GM12878 (cell line): ENCODE measurements at regions of chr11 and their contacts with region 1.

Region 1: GRCh38 chr11:125070699-125071254 is 7.7 kb downstream of the SLC37A2 start:
- DNase-seq: peak; percentile 56
- ATAC-seq: peak; percentile 74
- H3K4me3 ChIP-seq: no peak overlapping the region
- H3K27ac ChIP-seq: peak overlapping the region; percentile 48
- H3K4me1 ChIP-seq: peaks cover 43% of the 10 kb centered on the region
- H3K27me3 ChIP-seq: no peaks in the 10 kb centered on the region
- CTCF ChIP-seq: no peak
- EP300 ChIP-seq: peak; percentile 54 to 66; a peak in 2 of 4 replicates
- POLR2A ChIP-seq: peak; percentile 34; the same call in 1 of the 2 replicates
- RAD21 ChIP-seq: no peak

Region 2: DNA sequence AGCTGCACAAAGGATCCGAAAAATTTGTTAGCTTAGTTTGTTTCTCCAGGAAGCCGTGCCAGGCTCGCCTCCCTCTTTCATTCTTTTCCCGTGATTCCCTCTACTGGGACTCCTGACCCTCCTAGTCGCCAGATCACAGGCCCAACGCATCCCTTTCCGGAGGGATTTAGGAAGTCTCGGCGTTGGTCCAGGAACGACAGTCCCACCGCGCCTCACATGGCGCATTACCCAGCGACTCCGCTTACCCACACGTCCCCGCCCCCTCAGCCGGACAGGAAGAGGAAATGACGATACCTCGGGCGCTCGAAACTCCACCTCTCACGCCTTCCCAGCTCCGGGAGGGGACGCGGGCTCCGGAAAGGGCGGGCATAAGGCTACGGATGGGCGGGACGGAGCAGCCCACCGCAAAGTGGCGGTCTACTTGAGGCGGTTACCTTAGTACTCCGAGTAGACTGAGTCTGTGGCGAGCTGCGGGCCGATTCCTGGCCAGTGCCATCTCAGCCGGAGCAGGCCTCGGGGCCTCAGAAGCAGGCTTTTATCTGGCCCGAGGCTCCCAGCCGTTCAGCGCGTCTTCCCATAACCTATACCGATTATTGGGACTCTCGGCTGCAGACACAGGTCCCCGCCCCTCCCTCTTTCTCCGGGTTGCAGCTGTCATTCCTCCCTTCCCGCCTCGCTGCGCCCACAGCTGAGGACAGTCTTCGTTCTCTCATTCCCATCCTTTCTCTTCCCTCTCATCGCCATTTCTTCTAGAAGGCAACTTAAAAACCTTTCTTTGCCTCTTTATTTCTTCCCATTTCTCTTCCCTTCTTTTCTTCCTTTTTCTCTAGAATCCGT is 116.8 kb before region 1 on chr11 and contains the start of gene CCDC15:
- CTCF ChIA-PET with region 1: interaction called, 3 read pairs
- POLR2A ChIA-PET with region 1: interaction called, 12 read pairs
- RAD21 ChIA-PET with region 1: interaction called, 5 read pairs
- SMC1A ChIA-PET with region 1: interaction called, 7 read pairs
- in situ Hi-C with region 1: no loop called
- intact Hi-C with region 1: loop called (anchors 2 kb)
- DNase-seq: peak; percentile 87
- ATAC-seq: peak; percentile 99
- H3K4me3 ChIP-seq: peak within 1 kb of the TSS; percentile 79
- H3K27ac ChIP-seq: peak within 1 kb of the TSS; percentile 54
- H3K4me1 ChIP-seq: no peaks in the 10 kb centered on the region; the same call in 1 of the 2 replicates
- H3K27me3 ChIP-seq: no peaks in the 10 kb centered on the region
- CTCF ChIP-seq: no peak
- EP300 ChIP-seq: 0 out of 4 replicates have a peak, but pooled peaks of 1 of the 2 experiments have one; percentile 18
- POLR2A ChIP-seq: peak; percentile 99
- RAD21 ChIP-seq: no peak
- polyA plus RNA-seq, gene CCDC15: 2.0 to 2.8 TPM

Region 3: DNA sequence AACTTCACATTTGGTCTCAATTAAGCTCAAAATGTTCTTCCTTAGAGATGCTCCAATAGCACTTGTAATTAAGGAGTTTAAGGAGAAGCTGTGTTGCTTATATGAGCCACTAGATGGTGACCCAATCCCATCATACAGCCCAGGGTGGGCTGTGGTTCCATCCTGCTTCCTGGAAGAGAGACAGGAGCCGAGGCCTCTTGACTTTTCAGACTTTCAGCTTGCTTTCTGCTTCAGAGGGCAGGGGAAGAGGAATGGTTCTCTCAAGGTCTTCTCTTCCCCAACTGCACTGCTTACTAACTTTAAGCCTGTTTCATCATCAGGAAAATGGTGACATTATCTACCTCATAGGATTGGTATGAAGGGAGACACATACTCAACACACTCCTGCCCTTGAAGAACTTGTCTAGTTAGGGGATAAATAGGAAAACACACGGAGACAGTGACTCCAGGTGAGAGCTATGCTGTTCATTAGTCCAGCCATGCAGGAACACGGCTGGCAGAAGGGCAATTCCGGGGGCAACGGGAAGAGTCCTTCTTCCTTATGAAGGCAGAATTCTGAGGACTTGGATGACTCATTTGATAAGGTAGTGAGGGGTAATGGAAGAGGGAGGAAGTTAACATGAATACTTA is 20.6 kb after region 1 on chr11:
- CTCF ChIA-PET with region 1: interaction called, 14 read pairs
- POLR2A ChIA-PET with region 1: no interaction called
- RAD21 ChIA-PET with region 1: interaction called, 5 read pairs
- SMC1A ChIA-PET with region 1: interaction called, 8 read pairs
- in situ Hi-C with region 1: no loop called
- intact Hi-C with region 1: no loop called
- DNase-seq: no peak
- ATAC-seq: peak; percentile 86
- H3K4me3 ChIP-seq: no peak overlapping the region
- H3K27ac ChIP-seq: no peak overlapping the region
- H3K4me1 ChIP-seq: no peaks in the 10 kb centered on the region
- H3K27me3 ChIP-seq: no peaks in the 10 kb centered on the region
- CTCF ChIP-seq: peak; percentile 43 to 66 (median 54); a peak in 4 of 6 replicates
- EP300 ChIP-seq: no peak
- POLR2A ChIP-seq: no peak
- RAD21 ChIP-seq: peak; percentile 80

Region 4: DNA sequence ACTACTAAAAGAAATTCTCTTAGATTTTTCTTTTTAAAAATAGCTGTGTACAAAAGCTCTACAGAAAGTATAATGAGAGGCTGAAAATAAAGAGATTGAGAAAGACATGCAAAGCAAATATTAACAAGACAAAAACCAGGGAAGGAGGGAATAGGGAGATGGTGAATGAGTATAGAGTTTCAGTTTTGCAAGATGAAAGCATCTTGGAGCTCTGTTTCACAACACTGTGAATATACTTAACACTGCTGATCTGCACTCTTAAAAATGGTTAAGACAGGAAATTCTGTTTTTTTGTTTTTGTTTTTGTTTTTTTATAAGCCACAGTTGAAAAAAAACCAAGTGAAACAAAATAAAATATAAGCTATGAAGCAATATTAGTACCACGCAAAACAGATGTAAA is 35.1 kb after region 1 on chr11:
- CTCF ChIA-PET with region 1: interaction called, 46 read pairs
- POLR2A ChIA-PET with region 1: interaction called, 55 read pairs
- RAD21 ChIA-PET with region 1: interaction called, 87 read pairs
- SMC1A ChIA-PET with region 1: interaction called, 57 read pairs
- in situ Hi-C with region 1: no loop called
- intact Hi-C with region 1: loop called (anchors 1 kb)
- DNase-seq: no peak
- ATAC-seq: peak; percentile 34; the same call in 1 of the 3 replicates
- H3K4me3 ChIP-seq: no peak overlapping the region
- H3K27ac ChIP-seq: no peak overlapping the region
- H3K4me1 ChIP-seq: peaks cover 3% of the 10 kb centered on the region; the same call in 1 of the 2 replicates
- H3K27me3 ChIP-seq: no peaks in the 10 kb centered on the region
- CTCF ChIP-seq: no peak
- EP300 ChIP-seq: no peak
- POLR2A ChIP-seq: no peak
- RAD21 ChIP-seq: no peak

Region 5: GRCh38 chr11:125111343-125112207 is 40.8 kb after region 1 on chr11 and contains the start of gene TMEM218:
- CTCF ChIA-PET with region 1: interaction called, 46 read pairs
- POLR2A ChIA-PET with region 1: interaction called, 55 read pairs
- RAD21 ChIA-PET with region 1: interaction called, 87 read pairs
- SMC1A ChIA-PET with region 1: interaction called, 57 read pairs
- in situ Hi-C with region 1: no loop called
- intact Hi-C with region 1: loop called (anchors 1 kb)
- DNase-seq: peak; percentile 100
- ATAC-seq: peak; percentile 99
- H3K4me3 ChIP-seq: peak within 1 kb of the TSS; percentile 96
- H3K27ac ChIP-seq: peak within 1 kb of the TSS; percentile 49
- H3K4me1 ChIP-seq: no peaks in the 10 kb centered on the region; the same call in 1 of the 2 replicates
- H3K27me3 ChIP-seq: no peaks in the 10 kb centered on the region
- CTCF ChIP-seq: no peak
- EP300 ChIP-seq: no peak
- POLR2A ChIP-seq: peak; percentile 76
- RAD21 ChIP-seq: no peak
- polyA plus RNA-seq, gene TMEM218: 11.2 to 15.5 TPM

Region 6: DNA sequence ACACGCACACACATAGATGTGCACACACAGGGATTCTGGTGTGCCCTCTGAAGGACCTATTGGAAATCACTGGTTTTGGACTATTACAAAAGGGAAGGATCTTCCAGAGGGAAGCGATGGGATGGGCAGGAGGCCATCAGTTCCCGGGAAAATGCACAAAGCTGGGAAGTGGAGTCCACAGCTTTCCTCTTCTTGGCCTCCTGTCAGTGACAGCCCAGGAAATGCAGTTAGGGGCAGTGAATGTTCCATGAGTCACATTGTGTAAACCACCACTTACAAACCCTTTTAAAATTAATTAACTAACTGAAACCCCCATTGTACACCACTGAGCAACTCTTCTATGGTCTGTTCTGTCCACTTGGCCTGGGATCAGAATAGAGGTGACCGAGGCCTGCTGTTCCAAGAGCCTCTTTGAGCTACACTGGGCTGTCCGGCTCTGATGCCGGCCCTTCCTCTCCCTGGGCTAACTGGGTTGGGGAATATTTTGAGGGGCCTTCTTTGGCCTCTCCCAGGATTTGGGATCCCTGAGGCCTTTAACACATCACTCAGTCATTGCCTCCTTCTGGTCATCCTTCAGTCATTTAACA is 287.6 kb after region 1 on chr11:
- CTCF ChIA-PET with region 1: no interaction called
- POLR2A ChIA-PET with region 1: interaction called, 3 read pairs
- RAD21 ChIA-PET with region 1: interaction called, 13 read pairs
- SMC1A ChIA-PET with region 1: interaction called, 5 read pairs
- in situ Hi-C with region 1: no loop called
- intact Hi-C with region 1: no loop called
- DNase-seq: no peak
- ATAC-seq: peak; percentile 23; the same call in 2 of the 3 replicates
- H3K4me3 ChIP-seq: no peak overlapping the region
- H3K27ac ChIP-seq: no peak overlapping the region
- H3K4me1 ChIP-seq: no peaks in the 10 kb centered on the region; the same call in 1 of the 2 replicates
- H3K27me3 ChIP-seq: peaks cover 0 to 1% of the 10 kb centered on the region in 2 experiments; a peak in 2 of 4 replicates
- CTCF ChIP-seq: no peak
- EP300 ChIP-seq: no peak
- POLR2A ChIP-seq: no peak
- RAD21 ChIP-seq: no peak